ENCODE measurements at regions of chr1 and their contacts with region 1.

Region 1: DNA sequence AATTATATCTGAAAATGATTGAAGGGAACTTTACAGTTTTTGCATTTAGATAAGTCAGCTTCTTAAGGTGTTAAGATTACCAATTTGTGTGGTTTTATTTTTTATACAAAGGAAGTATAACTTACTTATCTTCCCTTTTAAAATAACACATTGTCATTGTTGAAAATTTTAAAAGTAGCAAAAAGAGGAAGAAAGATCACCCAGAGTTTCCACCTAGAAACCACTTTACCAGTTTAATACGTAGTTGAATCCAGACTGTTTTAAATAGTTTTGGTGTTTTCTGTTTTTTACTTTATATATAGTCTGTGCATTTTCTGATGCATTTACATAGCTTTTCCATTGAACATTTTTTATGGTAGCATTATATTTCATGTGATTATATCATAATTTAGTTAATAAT is 6.1 kb downstream of the CCDC18 start:
- DNase-seq: no peak
- ATAC-seq: no peak
- H3K4me3 ChIP-seq: no peak overlapping the region
- H3K27ac ChIP-seq: no peak overlapping the region
- H3K4me1 ChIP-seq: peaks cover 0 to 20% (median 0%) of the 10 kb centered on the region in 9 donors
- H3K27me3 ChIP-seq: no peaks in the 10 kb centered on the region
- CTCF ChIP-seq: no peak

Region 2: GRCh38 chr1:93235271-93235670 is 48.6 kb after region 1 on chr1:
- intact Hi-C with region 1: loop called in 1 of 10 experiments (anchors 5 kb)
- DNase-seq: no peak
- ATAC-seq: no peak
- H3K4me3 ChIP-seq: no peak overlapping the region
- H3K27ac ChIP-seq: no peak overlapping the region
- H3K4me1 ChIP-seq: no peaks in the 10 kb centered on the region
- H3K27me3 ChIP-seq: no peaks in the 10 kb centered on the region
- CTCF ChIP-seq: no peak

Measured in heart right ventricle (tissue), 16 donors.